Adrenal gland (tissue), 19 donors: ENCODE measurements at regions of chr5 and their contacts with region 1.

Region 1: DNA sequence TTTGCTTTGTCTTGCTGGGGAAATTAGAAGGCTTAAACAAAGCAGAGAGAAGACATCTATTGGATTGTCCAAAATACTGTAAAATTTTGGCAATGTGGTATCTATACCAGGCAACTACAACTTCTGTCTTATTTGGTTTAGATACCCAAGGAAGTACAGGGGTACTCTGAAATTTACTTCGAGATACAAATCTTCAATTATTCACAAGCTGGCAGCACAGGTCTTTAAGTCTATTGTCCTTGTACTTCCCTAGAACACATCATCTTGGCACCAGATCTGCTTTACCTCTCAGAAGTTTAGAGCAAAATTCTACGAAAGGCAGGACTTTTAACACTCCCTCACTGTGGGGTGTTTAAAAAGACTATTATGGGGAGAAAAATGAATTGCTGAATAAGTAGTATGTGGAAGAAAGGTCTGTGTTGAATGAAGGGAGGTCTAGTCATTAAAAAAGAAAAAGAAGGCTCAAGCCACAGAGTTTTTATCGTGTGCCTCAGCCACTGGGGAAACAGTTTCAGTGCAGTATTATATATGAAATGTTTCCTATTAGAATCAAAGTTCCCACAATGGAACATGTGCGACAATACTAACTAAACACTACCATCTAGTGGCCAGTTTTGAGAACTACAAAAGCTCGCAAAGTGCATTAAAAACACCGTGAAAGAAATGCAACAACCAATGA is 93.7 kb downstream of the PDE4D start:
- DNase-seq: no peak
- H3K4me3 ChIP-seq: no peak overlapping the region
- H3K27ac ChIP-seq: no peak overlapping the region
- H3K4me1 ChIP-seq: no peaks in the 10 kb centered on the region
- H3K27me3 ChIP-seq: peaks cover 8% of the 10 kb centered on the region
- CTCF ChIP-seq: peak; percentile 56 to 79 (median 74)
- POLR2A ChIP-seq: no peak

Region 2: DNA sequence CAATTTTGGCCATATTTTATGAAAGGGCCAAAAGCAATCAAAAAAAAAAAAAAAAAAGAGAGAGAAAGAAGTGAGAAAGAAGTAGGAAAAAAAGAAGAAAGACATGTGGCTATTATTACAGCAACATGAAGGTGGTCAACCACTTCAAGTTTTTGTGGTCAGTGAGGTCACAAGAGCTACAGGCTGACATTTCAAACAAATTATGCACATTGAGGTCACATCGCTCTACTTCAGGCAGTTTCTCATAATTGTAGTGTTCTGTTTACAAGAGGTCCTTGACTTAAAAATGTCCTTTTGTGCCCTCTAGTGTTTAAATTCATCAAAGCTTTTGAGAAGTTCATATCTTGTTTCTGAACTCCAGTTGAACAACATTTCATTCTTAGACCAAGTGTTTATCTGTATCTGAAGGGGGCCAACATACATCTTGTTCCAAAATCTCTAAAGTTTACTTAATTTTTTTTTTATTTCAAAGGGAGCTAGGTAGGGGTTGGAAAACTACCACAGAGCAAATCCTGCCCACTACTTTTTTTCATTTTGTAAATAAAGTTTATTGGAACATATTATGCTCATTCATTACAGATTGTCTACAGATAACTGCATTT is 419.4 kb before region 1 on chr5:
- intact Hi-C with region 1: loop called in 1 of 2 experiments (anchors 10 kb)
- DNase-seq: no peak
- H3K4me3 ChIP-seq: no peak overlapping the region
- H3K27ac ChIP-seq: no peak overlapping the region
- H3K4me1 ChIP-seq: no peaks in the 10 kb centered on the region
- H3K27me3 ChIP-seq: no peaks in the 10 kb centered on the region
- CTCF ChIP-seq: peak; percentile 13 to 58 (median 43)
- POLR2A ChIP-seq: no peak

Region 3: GRCh38 chr5:59390074-59390659 is 409.6 kb before region 1 on chr5:
- intact Hi-C with region 1: loop called (anchors 5 to 10 kb)
- DNase-seq: peak in 2 of 7 donors; percentile 29 to 34
- H3K4me3 ChIP-seq: no peak overlapping the region
- H3K27ac ChIP-seq: no peak overlapping the region
- H3K4me1 ChIP-seq: no peaks in the 10 kb centered on the region
- H3K27me3 ChIP-seq: no peaks in the 10 kb centered on the region
- CTCF ChIP-seq: peak; percentile 40 to 77 (median 56)
- POLR2A ChIP-seq: no peak

Region 4: DNA sequence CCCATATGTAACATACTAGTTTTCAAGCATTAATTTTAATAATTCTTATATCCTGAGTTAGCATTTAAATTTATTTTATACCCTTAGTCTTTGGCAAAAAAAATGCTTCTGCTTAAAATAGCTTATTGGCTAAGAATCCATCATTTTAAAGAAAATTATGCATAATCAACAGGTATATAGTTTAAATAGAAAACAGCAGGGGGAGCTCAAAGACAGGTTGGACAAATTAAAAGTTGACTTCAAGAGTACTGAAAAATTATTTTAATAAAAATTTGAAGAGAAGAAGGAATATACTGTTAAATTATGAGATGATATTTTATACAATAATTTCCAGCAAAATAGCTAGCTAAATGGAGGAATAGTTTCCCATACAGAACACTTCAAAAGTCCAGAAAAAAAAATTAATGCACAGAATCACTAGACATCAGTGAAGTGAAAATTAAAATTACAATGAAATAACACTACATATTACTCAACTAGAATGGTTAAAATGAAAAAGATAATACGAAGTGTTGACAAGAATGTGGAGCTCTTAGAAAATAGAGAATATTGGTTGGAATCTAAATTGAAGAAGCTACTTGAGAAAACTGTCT is 293.4 kb before region 1 on chr5:
- intact Hi-C with region 1: loop called in 1 of 2 experiments (anchors 5 kb)
- DNase-seq: no peak
- H3K4me3 ChIP-seq: no peak overlapping the region
- H3K27ac ChIP-seq: no peak overlapping the region
- H3K4me1 ChIP-seq: no peaks in the 10 kb centered on the region
- H3K27me3 ChIP-seq: no peaks in the 10 kb centered on the region
- CTCF ChIP-seq: peak; percentile 4 to 55 (median 33)
- POLR2A ChIP-seq: no peak

Region 5: GRCh38 chr5:60161340-60161934 is 361.6 kb after region 1 on chr5:
- intact Hi-C with region 1: loop called in 1 of 2 experiments (anchors 10 kb)
- DNase-seq: no peak
- H3K4me3 ChIP-seq: no peak overlapping the region
- H3K27ac ChIP-seq: no peak overlapping the region
- H3K4me1 ChIP-seq: no peaks in the 10 kb centered on the region
- H3K27me3 ChIP-seq: no peaks in the 10 kb centered on the region
- CTCF ChIP-seq: peak in 3 of 6 experiments; percentile 25 to 36 (median 35)
- POLR2A ChIP-seq: no peak